ENCODE measurements at regions of chr15 and their contacts with region 1.

Region 1: DNA sequence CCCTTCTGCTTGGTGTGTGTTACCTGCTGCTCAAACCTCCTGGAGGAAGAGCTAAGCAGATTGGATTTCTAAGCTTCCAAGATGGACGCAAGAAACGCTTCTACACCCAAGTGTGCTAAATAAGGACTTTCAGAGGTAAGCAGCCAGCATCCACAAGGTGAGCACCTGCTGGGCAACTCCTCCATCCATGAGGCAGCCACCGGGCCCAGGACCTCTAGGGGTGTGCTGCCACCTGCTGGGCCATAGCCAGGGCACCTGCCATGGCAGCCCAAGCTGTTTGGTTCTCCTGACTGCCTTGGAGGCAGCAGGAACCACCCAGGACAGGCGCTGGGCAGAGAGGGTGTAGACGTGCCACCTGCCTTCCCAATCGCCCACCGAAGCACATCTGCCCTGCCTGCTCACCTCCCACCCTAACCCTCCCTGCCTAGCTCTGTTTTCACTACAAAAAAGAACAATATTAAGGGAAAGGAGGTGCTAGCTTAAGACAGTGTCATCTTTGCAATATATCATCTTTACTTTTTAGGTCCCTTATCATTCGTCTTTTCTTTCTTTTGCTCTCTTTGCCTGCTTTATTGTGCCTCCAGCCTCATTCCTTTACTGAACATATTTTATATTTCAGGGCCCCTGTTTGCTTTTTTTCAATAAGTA is 12.9 kb downstream of the C15orf62 start:
- DNase-seq: peak; percentile 83
- H3K4me3 ChIP-seq: no peak overlapping the region
- H3K27ac ChIP-seq: no peak overlapping the region
- H3K4me1 ChIP-seq: peaks cover 7% of the 10 kb centered on the region
- H3K27me3 ChIP-seq: no peaks in the 10 kb centered on the region
- CTCF ChIP-seq: peak; percentile 72

Region 2: GRCh38 chr15:40746916-40747514 is 35.7 kb before region 1 on chr15:
- intact Hi-C with region 1: loop called (anchors 2 kb)
- DNase-seq: no peak
- H3K4me3 ChIP-seq: no peak overlapping the region
- H3K27ac ChIP-seq: no peak overlapping the region
- H3K4me1 ChIP-seq: no peaks in the 10 kb centered on the region
- H3K27me3 ChIP-seq: no peaks in the 10 kb centered on the region
- CTCF ChIP-seq: no peak

Measured in colonic mucosa (tissue), 4 donors.